B cell (primary cell): ENCODE measurements at regions of chr1 and their contacts with region 1.

Region 1: GRCh38 chr1:15696956-15697521 is 12.9 kb downstream of the PLEKHM2 start:
- DNase-seq: peak; percentile 92
- ATAC-seq: peak; percentile 95
- H3K4me3 ChIP-seq: peak overlapping the region; percentile 17 to 64 (median 54)
- H3K4me3 Mint-ChIP-seq: peak overlapping the region; percentile 85
- H3K27ac ChIP-seq: peak overlapping the region; percentile 68 to 88
- H3K27ac Mint-ChIP-seq: peak overlapping the region; percentile 95
- H3K4me1 ChIP-seq: peaks cover 41 to 54% of the 10 kb centered on the region in 2 donors
- H3K4me1 Mint-ChIP-seq: peaks cover 64% of the 10 kb centered on the region
- H3K27me3 ChIP-seq: no peaks in the 10 kb centered on the region
- H3K27me3 Mint-ChIP-seq: no peaks in the 10 kb centered on the region
- CTCF ChIP-seq: no peak

Region 2: DNA sequence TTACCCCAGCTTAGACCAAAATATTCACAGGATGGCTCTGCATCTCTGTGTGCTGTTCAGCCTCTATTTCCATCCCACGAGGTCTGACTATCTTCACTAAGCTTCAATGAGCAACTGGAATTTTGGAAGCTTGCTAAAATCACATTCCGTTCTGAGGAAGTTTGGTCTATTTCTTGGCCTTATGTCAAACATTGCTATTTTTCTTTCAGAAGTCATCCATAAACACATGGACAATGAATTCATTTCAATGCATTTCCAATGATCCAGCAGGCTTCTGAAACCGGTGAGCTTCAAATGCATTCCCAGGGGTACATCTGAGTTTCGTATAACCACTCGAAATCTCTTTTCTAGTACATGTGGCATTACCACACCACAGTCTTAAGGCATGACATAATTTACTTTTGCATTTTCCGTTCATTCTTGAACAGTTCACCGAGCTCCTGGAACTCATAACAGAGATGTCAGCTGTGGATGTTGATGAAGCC is 1392.6 kb before region 1 on chr1:
- CTCF ChIA-PET with region 1: no interaction called
- POLR2A ChIA-PET with region 1: no interaction called
- intact Hi-C with region 1: no loop called
- DNase-seq: no peak
- ATAC-seq: no peak
- H3K4me3 ChIP-seq: no peak overlapping the region
- H3K4me3 Mint-ChIP-seq: no peak overlapping the region
- H3K27ac ChIP-seq: no peak overlapping the region
- H3K27ac Mint-ChIP-seq: no peak overlapping the region
- H3K4me1 ChIP-seq: no peaks in the 10 kb centered on the region
- H3K4me1 Mint-ChIP-seq: no peaks in the 10 kb centered on the region
- H3K27me3 ChIP-seq: no peaks in the 10 kb centered on the region
- H3K27me3 Mint-ChIP-seq: peaks cover 29% of the 10 kb centered on the region
- CTCF ChIP-seq: no peak

Region 3: GRCh38 chr1:15571266-15571665 is 125.8 kb before region 1 on chr1:
- CTCF ChIA-PET with region 1: no interaction called
- POLR2A ChIA-PET with region 1: interaction called, 8 read pairs
- intact Hi-C with region 1: loop called (anchors 2 kb)
- DNase-seq: no peak
- ATAC-seq: no peak
- H3K4me3 ChIP-seq: peak overlapping the region in 2 of 5 experiments; percentile 15 to 16
- H3K4me3 Mint-ChIP-seq: peak overlapping the region; percentile 83
- H3K27ac ChIP-seq: peak overlapping the region; percentile 58 to 66
- H3K27ac Mint-ChIP-seq: peak overlapping the region; percentile 95
- H3K4me1 ChIP-seq: peaks cover 22 to 27% of the 10 kb centered on the region in 2 donors
- H3K4me1 Mint-ChIP-seq: peaks cover 26% of the 10 kb centered on the region
- H3K27me3 ChIP-seq: no peaks in the 10 kb centered on the region
- H3K27me3 Mint-ChIP-seq: no peaks in the 10 kb centered on the region
- CTCF ChIP-seq: no peak

Region 4: DNA sequence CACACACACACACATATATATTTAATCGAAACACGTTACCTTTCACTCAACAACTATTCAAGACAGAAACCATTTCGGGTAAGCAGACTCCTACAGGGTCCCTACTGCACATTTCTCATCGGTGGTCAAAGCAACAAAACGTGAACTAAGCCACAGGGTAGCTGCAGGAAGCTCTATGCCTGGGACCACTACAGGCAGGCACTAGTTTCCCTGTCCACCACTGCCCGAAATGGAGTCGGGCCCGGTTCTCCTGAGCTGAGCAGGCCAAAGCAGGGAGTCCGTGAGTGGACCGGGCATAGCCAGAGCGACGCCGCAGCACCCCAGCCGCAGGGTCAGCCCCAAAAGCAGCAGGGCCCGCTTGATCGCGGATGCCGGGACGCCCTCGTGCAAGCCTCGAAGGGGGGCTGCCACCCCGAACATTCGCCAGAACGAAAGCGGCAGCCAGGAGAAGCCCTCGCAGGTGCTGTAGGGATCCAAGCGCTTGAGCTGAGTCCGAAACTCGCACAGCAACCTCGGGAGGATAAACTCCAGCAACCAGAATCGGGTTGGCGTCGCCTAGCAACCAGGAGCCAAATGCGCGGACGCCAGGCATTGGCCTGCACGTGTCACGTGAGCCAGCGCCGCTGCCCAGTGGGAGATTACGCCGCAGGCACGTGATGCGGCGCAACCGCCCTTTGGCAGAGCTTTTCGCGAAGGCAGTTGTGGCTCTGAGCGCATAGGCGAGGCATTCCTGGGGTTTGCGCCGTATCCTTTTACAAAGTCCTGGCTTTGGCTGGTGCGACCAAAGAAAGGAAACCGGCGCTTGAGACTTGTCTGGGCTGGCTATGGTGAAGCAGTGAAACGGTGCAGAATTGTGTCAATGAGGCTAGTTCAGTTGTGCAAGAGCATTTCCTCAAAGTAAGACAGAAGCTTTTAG is 93.7 kb before region 1 on chr1:
- CTCF ChIA-PET with region 1: interaction called, 4 read pairs
- POLR2A ChIA-PET with region 1: no interaction called
- intact Hi-C with region 1: loop called (anchors 1 kb)
- DNase-seq: peak; percentile 96
- ATAC-seq: peak; percentile 97
- H3K4me3 ChIP-seq: peak overlapping the region; percentile 59 to 95 (median 72)
- H3K4me3 Mint-ChIP-seq: peak overlapping the region; percentile 86
- H3K27ac ChIP-seq: peak overlapping the region; percentile 34 to 80
- H3K27ac Mint-ChIP-seq: peak overlapping the region; percentile 79
- H3K4me1 ChIP-seq: peaks cover 5 to 11% of the 10 kb centered on the region in 2 donors
- H3K4me1 Mint-ChIP-seq: peaks cover 11% of the 10 kb centered on the region
- H3K27me3 ChIP-seq: no peaks in the 10 kb centered on the region
- H3K27me3 Mint-ChIP-seq: no peaks in the 10 kb centered on the region
- CTCF ChIP-seq: no peak

Region 5: DNA sequence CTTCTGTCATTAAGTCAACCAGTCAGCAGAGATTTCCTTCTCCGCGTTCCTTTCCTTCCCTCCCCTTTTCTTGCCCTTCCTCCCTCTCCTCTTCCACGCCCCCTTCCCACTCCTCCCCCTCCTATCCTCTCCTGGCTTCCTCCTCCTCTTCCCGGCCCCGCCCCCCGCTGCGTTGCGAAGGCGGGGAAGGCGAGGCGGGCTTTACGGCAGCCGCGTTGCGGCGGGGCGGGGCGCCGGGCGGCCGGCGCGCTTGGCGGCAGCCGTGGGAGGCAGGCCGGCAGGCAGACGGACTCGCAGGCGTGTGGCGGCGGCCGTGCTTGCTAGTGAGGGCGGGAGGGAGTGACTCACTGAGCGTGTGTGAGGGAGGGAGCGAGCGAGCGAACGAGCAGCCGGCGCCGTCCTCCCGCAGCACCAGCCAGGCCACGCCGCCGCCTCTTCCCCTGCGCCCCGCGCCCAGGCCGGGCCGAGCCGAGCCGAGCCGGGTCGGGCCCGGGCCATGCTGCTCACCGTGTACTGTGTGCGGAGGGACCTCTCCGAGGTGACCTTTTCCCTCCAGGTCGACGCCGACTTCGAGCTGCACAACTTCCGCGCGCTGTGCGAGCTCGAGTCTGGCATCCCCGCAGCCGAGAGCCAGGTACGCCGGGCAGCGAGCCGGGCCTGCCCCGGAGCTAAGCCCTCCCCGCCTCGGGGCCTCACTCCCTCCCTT is 79.7 kb before region 1 on chr1 and contains the start of gene DDI2:
- CTCF ChIA-PET with region 1: interaction called, 12 read pairs
- POLR2A ChIA-PET with region 1: interaction called, 3 read pairs
- intact Hi-C with region 1: loop called (anchors 1 kb)
- DNase-seq: peak; percentile 94
- ATAC-seq: peak; percentile 88
- H3K4me3 ChIP-seq: peak within 1 kb of the TSS; percentile 82 to 98 (median 90)
- H3K4me3 Mint-ChIP-seq: peak within 1 kb of the TSS; percentile 91
- H3K27ac ChIP-seq: peak within 1 kb of the TSS; percentile 88 to 92
- H3K27ac Mint-ChIP-seq: peak within 1 kb of the TSS; percentile 88
- H3K4me1 ChIP-seq: peaks cover 26 to 32% of the 10 kb centered on the region in 2 donors
- H3K4me1 Mint-ChIP-seq: peaks cover 35% of the 10 kb centered on the region
- H3K27me3 ChIP-seq: no peaks in the 10 kb centered on the region
- H3K27me3 Mint-ChIP-seq: no peaks in the 10 kb centered on the region
- CTCF ChIP-seq: no peak
- total RNA-seq, gene DDI2: 61.0 and 68.3 TPM in 2 replicates

Region 6: GRCh38 chr1:15656464-15656863 is 40.6 kb before region 1 on chr1:
- CTCF ChIA-PET with region 1: interaction called, 4 read pairs
- POLR2A ChIA-PET with region 1: no interaction called
- intact Hi-C with region 1: loop called (anchors 5 kb)
- DNase-seq: no peak
- ATAC-seq: no peak
- H3K4me3 ChIP-seq: no peak overlapping the region
- H3K4me3 Mint-ChIP-seq: no peak overlapping the region
- H3K27ac ChIP-seq: no peak overlapping the region
- H3K27ac Mint-ChIP-seq: no peak overlapping the region
- H3K4me1 ChIP-seq: no peaks in the 10 kb centered on the region
- H3K4me1 Mint-ChIP-seq: peaks cover 2% of the 10 kb centered on the region
- H3K27me3 ChIP-seq: no peaks in the 10 kb centered on the region
- H3K27me3 Mint-ChIP-seq: no peaks in the 10 kb centered on the region
- CTCF ChIP-seq: no peak

Region 7: DNA sequence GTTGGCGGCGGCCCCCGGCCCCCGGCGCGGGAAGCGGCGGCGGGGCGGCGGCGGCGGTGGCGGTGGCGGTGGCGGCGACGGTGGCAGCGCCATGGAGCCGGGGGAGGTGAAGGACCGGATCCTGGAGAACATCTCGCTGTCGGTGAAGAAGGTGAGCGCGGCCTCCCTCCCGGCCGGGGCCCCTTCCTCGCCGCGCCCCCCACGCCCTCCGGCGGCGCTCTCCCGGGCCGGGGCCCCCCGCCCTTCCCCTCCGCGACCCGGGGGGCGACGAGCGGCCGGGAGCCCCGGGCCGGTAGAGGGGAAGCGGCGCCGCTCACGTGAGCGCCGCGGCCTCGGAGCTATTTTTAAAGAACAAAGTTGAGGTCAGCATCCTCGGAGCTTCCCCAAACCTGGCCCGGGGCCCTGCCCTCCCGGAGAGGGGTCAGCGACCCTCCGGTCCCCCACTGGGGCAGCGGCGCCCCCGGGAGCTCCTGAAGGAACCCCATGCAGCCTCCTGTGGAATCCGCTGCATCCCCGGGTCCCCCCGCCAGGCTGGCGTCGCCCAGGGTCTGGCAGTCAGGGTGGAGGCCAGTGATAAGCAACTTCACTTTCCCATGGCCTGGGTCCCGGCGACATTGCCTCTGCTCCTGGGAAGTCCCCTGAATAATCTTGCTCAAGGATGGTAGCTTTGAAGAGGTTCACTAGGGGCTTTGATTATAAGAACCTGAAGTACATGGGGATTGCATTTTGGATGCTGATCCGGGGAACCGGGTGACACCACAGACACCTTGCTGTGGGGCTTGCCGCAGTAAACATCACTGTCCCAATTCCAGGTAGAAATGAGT is 12.4 kb before region 1 on chr1:
- CTCF ChIA-PET with region 1: interaction called, 7 read pairs
- POLR2A ChIA-PET with region 1: interaction called, 20 read pairs
- intact Hi-C with region 1: loop called (anchors 1 kb)
- DNase-seq: peak; percentile 75
- ATAC-seq: peak; percentile 8
- H3K4me3 ChIP-seq: peak overlapping the region; percentile 69 to 89 (median 82)
- H3K4me3 Mint-ChIP-seq: peak overlapping the region; percentile 91
- H3K27ac ChIP-seq: peak overlapping the region; percentile 83 to 84
- H3K27ac Mint-ChIP-seq: peak overlapping the region; percentile 92
- H3K4me1 ChIP-seq: peaks cover 37 to 50% of the 10 kb centered on the region in 2 donors
- H3K4me1 Mint-ChIP-seq: peaks cover 61% of the 10 kb centered on the region
- H3K27me3 ChIP-seq: no peaks in the 10 kb centered on the region
- H3K27me3 Mint-ChIP-seq: no peaks in the 10 kb centered on the region
- CTCF ChIP-seq: no peak

Region 8: GRCh38 chr1:15847100-15847892 is 150.3 kb after region 1 on chr1 and contains the start of gene SPEN:
- CTCF ChIA-PET with region 1: no interaction called
- POLR2A ChIA-PET with region 1: interaction called, 4 read pairs
- intact Hi-C with region 1: loop called (anchors 10 kb)
- DNase-seq: peak; percentile 99
- ATAC-seq: peak; percentile 80
- H3K4me3 ChIP-seq: peak within 1 kb of the TSS; percentile 82 to 99 (median 94)
- H3K4me3 Mint-ChIP-seq: peak within 1 kb of the TSS; percentile 97
- H3K27ac ChIP-seq: peak within 1 kb of the TSS; percentile 87 to 98
- H3K27ac Mint-ChIP-seq: peak within 1 kb of the TSS; percentile 99
- H3K4me1 ChIP-seq: peaks cover 51 to 72% of the 10 kb centered on the region in 2 donors
- H3K4me1 Mint-ChIP-seq: peaks cover 53% of the 10 kb centered on the region
- H3K27me3 ChIP-seq: no peaks in the 10 kb centered on the region
- H3K27me3 Mint-ChIP-seq: no peaks in the 10 kb centered on the region
- CTCF ChIP-seq: no peak
- total RNA-seq, gene SPEN: 126 and 140 TPM in 2 replicates

Region 9: DNA sequence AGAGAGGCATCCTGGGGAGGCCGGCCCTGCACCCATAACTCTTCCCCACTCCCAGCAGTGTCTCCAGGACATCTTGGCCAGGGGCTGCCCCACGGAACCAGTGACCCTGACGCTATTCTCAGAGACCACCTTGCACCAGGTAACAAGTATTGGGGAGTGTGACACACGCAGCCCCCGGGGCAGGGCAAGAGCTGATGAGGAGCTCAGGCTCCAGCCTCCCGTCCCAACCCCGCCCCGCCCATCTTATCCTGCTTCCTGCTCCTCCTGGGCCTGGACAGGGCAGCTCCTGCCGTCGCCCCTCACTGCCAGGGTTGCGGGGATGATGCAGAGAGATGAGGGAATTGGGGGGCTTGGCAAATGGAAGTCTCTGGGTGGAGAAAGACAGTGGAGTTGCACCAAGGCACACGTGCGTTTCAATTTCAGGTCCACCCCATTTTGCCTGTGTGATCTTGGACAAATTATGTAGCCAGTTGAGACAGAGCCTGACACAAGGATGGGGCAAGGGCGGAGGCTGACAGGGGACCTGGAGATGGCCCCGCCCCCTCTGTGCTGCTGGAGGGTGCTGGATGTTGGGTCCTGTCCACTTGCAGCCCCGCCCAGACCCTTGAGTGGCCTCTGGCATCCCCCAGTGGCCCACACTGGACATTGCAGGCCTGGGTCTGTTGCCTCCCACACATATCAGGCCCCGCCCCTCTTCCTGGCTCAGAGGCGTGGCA is 335.5 kb after region 1 on chr1:
- CTCF ChIA-PET with region 1: no interaction called
- POLR2A ChIA-PET with region 1: no interaction called
- intact Hi-C with region 1: no loop called
- DNase-seq: peak; percentile 72
- ATAC-seq: peak; percentile 97
- H3K4me3 ChIP-seq: no peak overlapping the region
- H3K4me3 Mint-ChIP-seq: no peak overlapping the region
- H3K27ac ChIP-seq: no peak overlapping the region
- H3K27ac Mint-ChIP-seq: no peak overlapping the region
- H3K4me1 ChIP-seq: no peaks in the 10 kb centered on the region
- H3K4me1 Mint-ChIP-seq: peaks cover 5% of the 10 kb centered on the region
- H3K27me3 ChIP-seq: peaks cover 0 to 21% (median 5%) of the 10 kb centered on the region in 4 experiments
- H3K27me3 Mint-ChIP-seq: peaks cover 38% of the 10 kb centered on the region
- CTCF ChIP-seq: peak; percentile 71